ENCODE measurements at regions of chr4 and their contacts with region 1.

Region 1: DNA sequence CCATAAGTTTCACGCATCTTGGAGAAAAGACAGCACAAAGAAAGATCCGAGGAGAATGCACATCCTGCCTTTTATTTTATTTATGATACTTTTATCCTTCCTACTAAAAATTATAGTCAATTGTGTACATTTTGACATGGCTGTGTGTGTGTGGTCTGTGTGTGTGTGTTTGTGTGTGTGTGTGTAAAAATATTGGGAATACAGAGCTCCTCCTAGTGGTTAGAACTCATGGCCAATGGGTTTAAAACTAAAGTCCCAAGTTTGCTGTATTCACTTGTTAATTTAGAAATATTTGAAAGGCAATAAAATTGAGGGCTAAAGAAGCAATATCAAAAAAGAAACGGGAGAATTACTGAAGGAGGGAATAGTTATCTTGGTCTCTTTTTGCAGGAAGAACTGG is 47.5 kb downstream of the NKX6-1 start:
- DNase-seq: no peak
- H3K4me3 ChIP-seq: no peak overlapping the region
- H3K27ac ChIP-seq: no peak overlapping the region
- H3K4me1 ChIP-seq: no peaks in the 10 kb centered on the region
- H3K27me3 ChIP-seq: no peaks in the 10 kb centered on the region
- CTCF ChIP-seq: peak in 2 of 3 experiments; percentile 46 to 51; a peak in 3 of 4 replicates
- EP300 ChIP-seq: no peak
- POLR2A ChIP-seq: no peak
- RAD21 ChIP-seq: peak; percentile 59 to 65

Region 2: DNA sequence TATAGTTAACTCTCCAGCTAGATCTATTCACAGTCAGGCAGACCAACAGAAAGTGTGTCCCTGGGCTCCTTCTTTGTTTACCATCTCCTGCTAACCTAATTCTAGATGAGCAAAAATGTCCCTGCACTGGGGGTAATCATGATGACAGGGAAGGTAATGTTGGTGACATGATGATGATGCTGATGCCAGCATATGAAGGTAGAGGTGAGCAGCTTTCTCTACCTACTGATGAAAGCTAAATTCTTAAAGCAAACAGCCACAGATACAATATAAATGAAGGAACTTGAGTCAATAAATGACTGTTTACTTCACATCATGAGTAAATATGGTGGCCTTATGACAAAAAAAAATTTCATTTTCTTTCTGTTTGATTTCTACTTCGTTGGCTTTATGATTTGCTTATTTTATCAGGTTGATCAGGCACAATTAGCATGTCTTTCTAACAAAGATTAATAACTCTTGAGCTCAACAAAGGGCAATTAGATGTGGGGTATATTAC is 30.9 kb before region 1 on chr4:
- CTCF ChIA-PET with region 1: interaction called, 11 read pairs
- POLR2A ChIA-PET with region 1: no interaction called
- DNase-seq: no peak
- H3K4me3 ChIP-seq: no peak overlapping the region
- H3K27ac ChIP-seq: no peak overlapping the region
- H3K4me1 ChIP-seq: no peaks in the 10 kb centered on the region
- H3K27me3 ChIP-seq: no peaks in the 10 kb centered on the region
- CTCF ChIP-seq: no peak
- EP300 ChIP-seq: no peak
- POLR2A ChIP-seq: no peak
- RAD21 ChIP-seq: no peak

Region 3: DNA sequence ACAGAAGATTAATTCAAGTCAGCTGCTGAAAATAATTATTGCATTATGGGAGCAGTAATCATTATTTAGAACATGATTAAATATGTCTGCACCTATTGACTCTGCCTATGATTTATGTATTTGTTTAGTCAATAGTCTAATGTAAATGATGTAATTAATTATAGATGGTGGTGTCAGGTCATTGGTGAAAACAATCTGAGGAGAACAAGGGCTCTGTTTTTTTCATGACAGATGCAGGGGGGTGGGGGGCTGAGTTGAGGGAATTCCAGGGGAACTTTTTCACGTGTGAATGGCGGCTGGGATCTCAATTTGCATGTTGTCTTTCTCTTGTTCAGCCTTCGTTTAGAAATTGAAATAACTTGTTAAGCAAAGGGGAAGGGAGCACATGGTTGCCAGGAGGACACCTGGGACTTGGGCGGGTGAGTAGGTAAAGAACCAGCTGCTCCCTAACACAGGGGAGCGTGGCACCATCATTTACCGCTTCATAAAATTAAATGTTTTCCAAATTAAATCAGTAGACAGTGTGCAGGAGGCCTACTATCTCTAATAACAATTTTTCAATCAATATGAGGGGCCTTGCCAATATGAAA is 17.8 kb before region 1 on chr4:
- CTCF ChIA-PET with region 1: interaction called, 18 read pairs
- POLR2A ChIA-PET with region 1: no interaction called
- DNase-seq: no peak
- H3K4me3 ChIP-seq: no peak overlapping the region
- H3K27ac ChIP-seq: no peak overlapping the region
- H3K4me1 ChIP-seq: peaks cover 0 to 9% (median 0%) of the 10 kb centered on the region in 4 experiments; a peak in 1 of 7 replicates
- H3K27me3 ChIP-seq: no peaks in the 10 kb centered on the region
- CTCF ChIP-seq: no peak
- EP300 ChIP-seq: no peak
- POLR2A ChIP-seq: no peak
- RAD21 ChIP-seq: no peak

Region 4: DNA sequence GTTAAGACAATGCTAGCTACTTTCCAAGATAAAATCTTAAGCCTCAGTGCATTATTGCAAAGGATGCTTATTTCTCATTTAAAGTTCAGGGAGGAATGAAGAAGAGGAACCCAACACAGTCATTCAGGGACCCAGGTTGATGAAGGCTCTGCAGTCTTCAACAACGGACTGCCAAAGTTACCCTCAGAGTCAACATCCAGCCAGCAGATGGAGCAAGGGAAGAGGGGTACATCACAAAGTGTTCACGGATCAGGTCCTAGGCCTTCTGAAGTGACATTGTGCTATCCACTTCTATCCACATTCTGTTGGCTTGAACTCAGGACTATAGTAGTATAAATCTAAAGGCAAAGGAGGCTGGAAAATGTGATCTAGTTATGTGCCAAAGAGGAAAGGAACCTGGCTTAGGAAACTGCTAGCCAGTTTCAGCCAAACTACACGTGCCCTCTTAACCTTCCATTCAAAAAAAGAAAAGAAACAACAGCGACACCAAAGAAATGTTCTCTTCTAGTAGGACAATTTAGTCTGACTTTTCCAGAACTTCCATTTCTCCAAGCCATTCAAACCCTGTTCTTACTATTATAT is 18.7 kb after region 1 on chr4:
- CTCF ChIA-PET with region 1: interaction called, 51 read pairs
- POLR2A ChIA-PET with region 1: no interaction called
- DNase-seq: no peak
- H3K4me3 ChIP-seq: no peak overlapping the region
- H3K27ac ChIP-seq: no peak overlapping the region
- H3K4me1 ChIP-seq: no peaks in the 10 kb centered on the region
- H3K27me3 ChIP-seq: no peaks in the 10 kb centered on the region
- CTCF ChIP-seq: peak; percentile 64 to 78 (median 65)
- EP300 ChIP-seq: no peak
- POLR2A ChIP-seq: no peak
- RAD21 ChIP-seq: peak; percentile 63 to 71

Region 5: GRCh38 chr4:84482564-84483563 is 31.3 kb after region 1 on chr4:
- CTCF ChIA-PET with region 1: interaction called, 13 read pairs
- POLR2A ChIA-PET with region 1: no interaction called
- DNase-seq: peak in 1 of 2 experiments; percentile 97
- H3K4me3 ChIP-seq: peak overlapping the region in 3 of 4 experiments; percentile 1 to 52 (median 21); a peak in 5 of 8 replicates
- H3K27ac ChIP-seq: no peak overlapping the region
- H3K4me1 ChIP-seq: peaks cover 0 to 10% (median 5%) of the 10 kb centered on the region in 4 experiments; a peak in 5 of 7 replicates
- H3K27me3 ChIP-seq: peaks cover 55 to 89% (median 76%) of the 10 kb centered on the region in 4 experiments
- CTCF ChIP-seq: peak; percentile 98 to 100 (median 100)
- EP300 ChIP-seq: no peak
- POLR2A ChIP-seq: no peak
- RAD21 ChIP-seq: peak; percentile 57 to 70

Measured in H1 (cell line).